ENCODE measurements at regions of chr11 and their contacts with region 1.

Region 1: GRCh38 chr11:4484836-4485235 is 2.4 kb downstream of the OR52K1 start:
- DNase-seq: no peak
- H3K4me3 ChIP-seq: no peak overlapping the region
- H3K27ac ChIP-seq: no peak overlapping the region
- H3K4me1 ChIP-seq: no peaks in the 10 kb centered on the region
- H3K27me3 ChIP-seq: no peaks in the 10 kb centered on the region
- CTCF ChIP-seq: no peak

Region 2: DNA sequence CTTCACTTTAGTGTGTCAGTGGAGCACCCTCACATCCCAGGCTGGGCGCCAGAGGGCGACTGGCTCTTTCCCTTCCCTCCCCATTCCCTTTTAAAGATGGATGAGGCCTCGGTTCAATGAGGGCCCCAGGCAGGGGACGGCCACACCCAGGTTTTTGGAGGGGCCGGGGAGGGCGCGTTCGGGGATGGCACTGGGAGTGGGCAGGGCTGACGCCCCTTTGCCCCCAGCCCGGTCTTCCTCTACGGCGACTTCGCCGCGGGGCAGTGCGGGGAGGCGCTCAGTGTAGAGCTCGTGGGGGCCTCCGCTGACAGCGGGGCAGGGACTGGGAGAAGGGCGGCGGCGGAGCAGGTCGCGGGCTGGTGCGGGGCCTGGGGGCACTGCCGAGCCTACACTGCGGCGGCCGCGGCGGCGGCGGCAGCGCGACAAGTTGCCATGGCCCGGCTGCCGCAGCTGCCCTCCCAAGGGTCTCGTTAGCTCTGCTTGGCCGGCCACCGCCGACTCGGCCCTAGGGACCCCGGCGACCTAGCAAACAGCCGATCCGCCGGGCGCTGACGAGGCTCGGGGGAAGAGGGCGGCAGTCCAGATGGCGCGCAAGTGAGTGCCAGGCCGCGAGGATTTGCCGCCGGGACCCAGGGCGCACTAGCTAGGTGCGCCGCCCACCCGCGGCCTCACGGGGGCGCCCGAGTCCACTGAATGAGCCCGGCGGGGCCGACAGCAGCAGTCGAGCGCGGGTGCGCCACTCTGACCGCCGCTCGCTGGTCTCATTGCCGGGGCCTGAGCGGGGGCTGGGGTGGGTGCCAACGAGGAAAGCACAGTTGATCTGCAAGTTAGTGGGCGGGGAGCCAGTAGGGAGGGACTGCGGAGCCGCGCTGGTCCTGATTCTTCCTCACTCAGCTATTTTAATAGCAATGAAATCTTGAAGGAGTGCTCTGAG is 297.5 kb before region 1 on chr11:
- intact Hi-C with region 1: loop called (anchors 5 kb)
- DNase-seq: peak; percentile 91 to 97 (median 93)
- H3K4me3 ChIP-seq: peak overlapping the region; percentile 4 to 55 (median 34)
- H3K27ac ChIP-seq: no peak overlapping the region
- H3K4me1 ChIP-seq: peaks cover 0 to 3% (median 2%) of the 10 kb centered on the region in 3 donors
- H3K27me3 ChIP-seq: no peaks in the 10 kb centered on the region
- CTCF ChIP-seq: peak; percentile 94

Region 3: GRCh38 chr11:4441515-4441914 is 43.3 kb before region 1 on chr11:
- intact Hi-C with region 1: no loop called
- DNase-seq: no peak
- H3K4me3 ChIP-seq: no peak overlapping the region
- H3K27ac ChIP-seq: no peak overlapping the region
- H3K4me1 ChIP-seq: no peaks in the 10 kb centered on the region
- H3K27me3 ChIP-seq: no peaks in the 10 kb centered on the region
- CTCF ChIP-seq: no peak

Measured in kidney (tissue), 22 donors.